Caco-2 (cell line): ENCODE measurements at regions of chr6 and their contacts with region 1.

Region 1: GRCh38 chr6:157021344-157021992 is 244.3 kb downstream of the ARID1B start:
- DNase-seq: peak; percentile 90
- H3K4me3 ChIP-seq: peak overlapping the region; percentile 74
- H3K4me3 Mint-ChIP-seq: peak overlapping the region; percentile 88
- H3K27ac Mint-ChIP-seq: peak overlapping the region; percentile 94
- H3K4me1 ChIP-seq: peaks cover 10% of the 10 kb centered on the region
- H3K4me1 Mint-ChIP-seq: peaks cover 16% of the 10 kb centered on the region
- H3K27me3 ChIP-seq: no peaks in the 10 kb centered on the region
- H3K27me3 Mint-ChIP-seq: no peaks in the 10 kb centered on the region
- CTCF ChIP-seq: peak; percentile 33 to 41

Region 2: GRCh38 chr6:156310701-156311100 is 710.8 kb before region 1 on chr6:
- CTCF ChIA-PET with region 1: no interaction called
- POLR2A ChIA-PET with region 1: no interaction called
- intact Hi-C with region 1: no loop called
- DNase-seq: no peak
- H3K4me3 ChIP-seq: no peak overlapping the region
- H3K4me3 Mint-ChIP-seq: no peak overlapping the region
- H3K27ac Mint-ChIP-seq: no peak overlapping the region
- H3K4me1 ChIP-seq: no peaks in the 10 kb centered on the region
- H3K4me1 Mint-ChIP-seq: no peaks in the 10 kb centered on the region
- H3K27me3 ChIP-seq: no peaks in the 10 kb centered on the region
- H3K27me3 Mint-ChIP-seq: peaks cover 8% of the 10 kb centered on the region
- CTCF ChIP-seq: no peak

Region 3: DNA sequence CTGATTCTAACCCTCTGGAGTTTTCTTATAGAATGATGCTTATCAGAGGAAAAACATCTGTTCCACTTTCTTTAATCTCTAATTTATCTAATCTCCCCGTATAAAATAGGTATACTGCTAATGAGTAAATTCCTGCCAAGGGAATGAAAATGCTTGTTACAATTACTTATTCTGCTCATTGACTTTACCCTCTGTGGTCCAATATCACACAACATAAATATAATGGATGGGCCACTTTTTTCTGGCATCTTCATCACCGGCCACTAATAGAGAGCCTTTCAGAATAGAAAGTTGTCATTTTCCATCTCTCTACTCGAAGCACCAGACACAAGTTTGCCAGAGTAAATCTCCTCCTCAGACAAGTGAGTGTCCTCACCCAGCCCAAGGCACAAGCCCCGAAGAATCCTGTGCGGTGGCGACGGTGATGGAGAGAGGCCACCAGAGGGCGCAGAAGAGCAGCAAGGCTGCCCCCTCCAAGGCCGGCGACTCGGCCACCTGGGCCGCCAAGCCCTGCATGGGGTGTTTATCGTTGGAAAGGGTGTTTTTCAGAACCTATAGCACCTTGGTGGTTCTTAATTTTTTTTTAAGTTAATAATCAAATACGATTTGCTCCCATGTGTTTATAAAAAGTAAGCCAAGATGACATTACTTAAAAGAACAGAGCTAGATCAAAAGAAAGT is 457.2 kb before region 1 on chr6:
- CTCF ChIA-PET with region 1: no interaction called
- POLR2A ChIA-PET with region 1: no interaction called
- intact Hi-C with region 1: loop called (anchors 10 kb)
- DNase-seq: peak; percentile 45 to 73
- H3K4me3 ChIP-seq: no peak overlapping the region
- H3K4me3 Mint-ChIP-seq: no peak overlapping the region
- H3K27ac Mint-ChIP-seq: no peak overlapping the region
- H3K4me1 ChIP-seq: 0 out of 2 replicates have a peak, but pooled peaks cover 3% of the 10 kb centered on the region
- H3K4me1 Mint-ChIP-seq: no peaks in the 10 kb centered on the region
- H3K27me3 ChIP-seq: no peaks in the 10 kb centered on the region
- H3K27me3 Mint-ChIP-seq: peaks cover 9% of the 10 kb centered on the region
- CTCF ChIP-seq: peak; percentile 88

Region 4: DNA sequence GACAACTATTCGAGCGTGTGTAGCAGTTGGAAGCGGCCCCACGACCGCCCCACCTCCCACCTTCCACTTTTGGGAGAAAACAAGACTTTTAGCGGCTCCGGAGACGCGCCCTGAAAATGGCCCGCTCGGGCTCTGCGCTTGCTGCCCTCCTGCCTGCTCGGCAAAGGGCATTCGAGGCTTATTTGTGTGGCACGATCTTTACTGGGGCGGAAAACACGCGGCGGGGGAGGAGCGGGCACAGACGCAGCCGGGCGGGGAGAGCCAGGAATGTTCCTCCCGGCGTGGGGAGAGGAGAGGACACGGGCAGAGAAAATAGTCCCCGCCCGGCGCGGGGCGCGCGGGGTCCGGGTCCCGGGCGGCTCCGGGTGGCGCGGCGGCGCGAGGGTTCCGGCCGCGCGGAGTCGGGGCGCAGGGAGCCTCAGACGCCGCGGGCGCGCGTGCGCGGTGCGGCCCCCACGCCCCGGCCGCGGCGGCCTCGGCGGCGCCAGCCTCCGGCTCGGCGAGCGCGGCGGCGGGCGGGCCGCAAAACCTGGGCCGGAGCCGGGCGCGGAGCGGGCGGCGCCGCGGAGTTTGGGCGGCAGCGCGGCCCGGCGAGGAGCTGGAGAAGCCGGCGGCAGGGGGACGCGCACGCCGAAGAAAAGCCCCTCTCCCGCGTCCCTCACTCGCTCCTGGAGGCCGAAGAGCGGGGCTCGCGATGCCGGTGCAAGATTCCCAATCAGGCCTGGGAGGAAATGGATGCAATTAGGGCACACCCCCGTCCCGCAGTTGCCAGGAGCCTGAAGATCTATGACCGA is 334.3 kb before region 1 on chr6:
- CTCF ChIA-PET with region 1: no interaction called
- POLR2A ChIA-PET with region 1: no interaction called
- intact Hi-C with region 1: loop called (anchors 1 kb)
- DNase-seq: peak; percentile 67 to 84
- H3K4me3 ChIP-seq: peak overlapping the region; percentile 79
- H3K4me3 Mint-ChIP-seq: peak overlapping the region; percentile 75
- H3K27ac Mint-ChIP-seq: peak overlapping the region; percentile 33
- H3K4me1 ChIP-seq: no peaks in the 10 kb centered on the region; the same call in 1 of the 2 replicates
- H3K4me1 Mint-ChIP-seq: peaks cover 17% of the 10 kb centered on the region
- H3K27me3 ChIP-seq: no peaks in the 10 kb centered on the region; the same call in 1 of the 2 replicates
- H3K27me3 Mint-ChIP-seq: no peaks in the 10 kb centered on the region
- CTCF ChIP-seq: no peak

Region 5: DNA sequence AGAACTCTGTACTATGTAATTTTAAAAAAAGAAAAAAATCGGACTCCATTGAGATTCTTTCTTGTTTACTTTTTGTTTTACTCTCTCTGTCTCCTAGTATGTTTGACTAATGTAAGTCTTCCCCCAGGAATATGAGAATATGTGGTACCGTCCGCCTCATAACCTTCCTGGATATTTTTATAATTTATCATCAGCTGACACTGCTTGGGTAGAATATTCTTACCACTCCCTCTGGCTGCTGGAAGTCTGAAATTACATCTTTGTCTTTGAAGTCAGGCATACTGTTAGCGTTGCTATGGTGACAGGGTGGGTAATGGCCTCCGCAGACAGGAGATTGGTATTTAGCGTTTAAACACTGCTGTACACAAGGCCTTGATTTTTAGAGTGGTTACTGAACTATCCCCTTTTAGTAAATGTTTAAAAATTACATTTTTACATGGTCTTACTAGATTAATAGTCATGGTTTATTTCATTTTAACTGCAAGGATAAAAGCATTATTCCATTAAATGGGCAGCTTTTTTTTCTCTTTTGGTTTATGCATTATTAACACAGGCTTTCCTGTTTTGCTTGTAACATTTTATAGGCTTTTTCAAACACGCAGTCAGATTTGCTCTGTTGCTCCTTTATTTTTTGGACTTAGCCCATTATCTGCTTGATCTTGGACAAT is 67.9 kb before region 1 on chr6:
- CTCF ChIA-PET with region 1: no interaction called
- POLR2A ChIA-PET with region 1: no interaction called
- intact Hi-C with region 1: loop called (anchors 5 kb)
- DNase-seq: peak; percentile 57 to 76
- H3K4me3 ChIP-seq: no peak overlapping the region
- H3K4me3 Mint-ChIP-seq: no peak overlapping the region
- H3K27ac Mint-ChIP-seq: peak overlapping the region; percentile 60
- H3K4me1 ChIP-seq: peaks cover 23% of the 10 kb centered on the region
- H3K4me1 Mint-ChIP-seq: peaks cover 16% of the 10 kb centered on the region
- H3K27me3 ChIP-seq: no peaks in the 10 kb centered on the region
- H3K27me3 Mint-ChIP-seq: no peaks in the 10 kb centered on the region
- CTCF ChIP-seq: peak in 1 of 2 experiments; percentile 20

Region 6: DNA sequence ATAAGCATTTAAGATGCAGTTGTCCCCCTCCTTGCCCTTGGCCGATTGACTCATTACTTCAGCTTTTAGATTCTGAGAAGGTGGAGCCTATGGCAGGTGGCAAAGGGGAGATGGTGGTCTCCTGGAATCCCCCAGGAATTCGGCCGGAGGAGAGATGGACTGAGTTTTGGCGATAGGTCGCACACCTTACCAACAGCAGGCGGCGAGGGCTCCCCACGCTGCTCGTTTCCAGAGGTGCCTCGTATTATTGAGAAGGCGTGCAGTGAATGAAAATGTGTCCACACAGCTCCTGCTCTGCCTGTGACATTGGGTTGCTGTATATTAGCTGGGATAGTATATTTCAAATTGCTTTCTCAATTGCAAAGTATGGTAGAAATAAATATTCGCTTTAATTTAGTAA is 19.8 kb before region 1 on chr6:
- CTCF ChIA-PET with region 1: no interaction called
- POLR2A ChIA-PET with region 1: no interaction called
- intact Hi-C with region 1: loop called (anchors 2 kb)
- DNase-seq: no peak
- H3K4me3 ChIP-seq: no peak overlapping the region
- H3K4me3 Mint-ChIP-seq: no peak overlapping the region
- H3K27ac Mint-ChIP-seq: no peak overlapping the region
- H3K4me1 ChIP-seq: no peaks in the 10 kb centered on the region
- H3K4me1 Mint-ChIP-seq: peaks cover 15% of the 10 kb centered on the region
- H3K27me3 ChIP-seq: no peaks in the 10 kb centered on the region
- H3K27me3 Mint-ChIP-seq: no peaks in the 10 kb centered on the region
- CTCF ChIP-seq: no peak

Region 7: DNA sequence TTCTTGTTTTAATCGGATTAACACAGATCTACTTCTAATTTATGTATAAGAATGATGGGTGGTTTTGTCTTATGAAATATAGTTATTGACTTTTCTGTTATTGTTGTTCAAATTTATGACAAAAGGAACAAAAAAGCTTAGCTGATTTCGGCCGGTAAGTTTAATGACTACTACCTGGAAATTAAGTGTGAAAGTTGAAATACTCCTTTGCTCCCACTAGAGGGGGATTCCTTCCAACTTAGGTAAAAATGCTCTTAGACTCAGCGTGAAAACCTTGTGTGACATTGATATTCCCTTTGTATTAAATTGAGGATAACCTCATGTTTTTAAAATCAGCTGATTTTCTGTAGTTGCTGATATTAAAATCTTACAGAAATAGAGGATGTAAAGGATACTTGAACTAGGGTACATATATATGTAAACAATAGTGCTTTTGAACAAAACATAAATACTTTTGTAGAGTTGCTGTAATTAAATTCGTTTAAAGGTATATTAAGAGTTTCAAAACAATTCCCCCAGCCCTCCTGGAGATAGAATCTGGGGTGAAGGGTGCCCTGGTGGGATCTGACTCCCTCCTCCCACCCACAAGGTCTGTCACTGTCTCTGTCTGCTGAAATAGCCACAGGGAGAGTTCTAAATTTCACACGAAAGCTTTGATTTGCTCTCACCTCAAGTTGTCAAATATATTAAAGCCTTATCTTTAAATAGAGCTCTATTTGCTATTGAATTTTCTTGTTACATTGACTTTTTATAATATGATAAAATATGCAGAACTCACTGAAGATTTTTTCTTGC is 13.2 kb after region 1 on chr6:
- CTCF ChIA-PET with region 1: no interaction called
- POLR2A ChIA-PET with region 1: interaction called, 3 read pairs
- intact Hi-C with region 1: loop called (anchors 2 kb)
- DNase-seq: peak in 1 of 2 experiments; percentile 16
- H3K4me3 ChIP-seq: no peak overlapping the region
- H3K4me3 Mint-ChIP-seq: no peak overlapping the region
- H3K27ac Mint-ChIP-seq: no peak overlapping the region
- H3K4me1 ChIP-seq: peaks cover 11% of the 10 kb centered on the region
- H3K4me1 Mint-ChIP-seq: no peaks in the 10 kb centered on the region
- H3K27me3 ChIP-seq: no peaks in the 10 kb centered on the region
- H3K27me3 Mint-ChIP-seq: no peaks in the 10 kb centered on the region
- CTCF ChIP-seq: peak; percentile 65 to 73

Region 8: DNA sequence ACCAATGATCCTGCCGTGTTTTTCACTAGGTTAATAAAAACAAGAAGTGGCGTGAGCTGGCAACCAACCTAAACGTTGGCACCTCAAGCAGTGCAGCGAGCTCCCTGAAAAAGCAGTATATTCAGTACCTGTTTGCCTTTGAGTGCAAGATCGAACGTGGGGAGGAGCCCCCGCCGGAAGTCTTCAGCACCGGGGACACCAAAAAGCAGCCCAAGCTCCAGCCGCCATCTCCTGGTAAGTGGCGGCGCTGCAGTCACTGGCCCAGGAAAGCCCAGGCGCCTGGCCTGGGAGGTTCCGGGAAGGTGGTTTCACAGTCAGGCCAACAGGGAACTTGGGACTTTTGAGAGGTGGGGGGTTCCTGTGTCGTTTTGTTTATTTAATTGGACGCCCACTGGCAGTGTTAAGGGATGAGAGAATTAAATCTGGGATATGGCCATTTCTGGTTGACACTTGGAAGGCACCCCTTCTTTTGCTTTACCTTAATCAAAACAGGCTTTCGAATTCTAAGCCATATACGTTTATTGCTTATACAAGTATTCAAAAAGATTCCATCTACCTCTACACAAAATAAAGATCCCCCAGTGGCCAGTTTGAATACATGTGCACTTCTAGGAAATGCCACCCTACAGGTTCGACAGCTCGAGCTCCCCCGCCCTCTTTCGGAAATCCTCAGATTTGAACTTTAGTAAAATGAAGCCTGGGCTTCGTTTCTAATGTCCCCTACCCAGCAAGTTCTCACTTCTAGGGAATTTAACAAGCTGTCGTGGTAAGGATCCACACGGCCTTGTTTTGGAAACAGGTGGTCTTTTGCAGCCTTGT is 162.9 kb after region 1 on chr6:
- CTCF ChIA-PET with region 1: no interaction called
- POLR2A ChIA-PET with region 1: no interaction called
- intact Hi-C with region 1: no loop called
- DNase-seq: peak; percentile 57 to 78
- H3K4me3 ChIP-seq: no peak overlapping the region
- H3K4me3 Mint-ChIP-seq: no peak overlapping the region
- H3K27ac Mint-ChIP-seq: no peak overlapping the region
- H3K4me1 ChIP-seq: peaks cover 10% of the 10 kb centered on the region
- H3K4me1 Mint-ChIP-seq: peaks cover 12% of the 10 kb centered on the region
- H3K27me3 ChIP-seq: no peaks in the 10 kb centered on the region
- H3K27me3 Mint-ChIP-seq: no peaks in the 10 kb centered on the region
- CTCF ChIP-seq: peak; percentile 85 to 89